ENCODE measurements at regions of chr4 and their contacts with region 1.

Region 1: GRCh38 chr4:159104694-159105414 is 2.0 kb downstream of the RAPGEF2 start:
- DNase-seq: no peak
- H3K4me3 Mint-ChIP-seq: peak overlapping the region; percentile 90
- H3K27ac Mint-ChIP-seq: peak overlapping the region; percentile 90
- H3K4me1 Mint-ChIP-seq: peaks cover 27% of the 10 kb centered on the region
- H3K27me3 Mint-ChIP-seq: no peaks in the 10 kb centered on the region
- CTCF ChIP-seq: no peak

Region 2: DNA sequence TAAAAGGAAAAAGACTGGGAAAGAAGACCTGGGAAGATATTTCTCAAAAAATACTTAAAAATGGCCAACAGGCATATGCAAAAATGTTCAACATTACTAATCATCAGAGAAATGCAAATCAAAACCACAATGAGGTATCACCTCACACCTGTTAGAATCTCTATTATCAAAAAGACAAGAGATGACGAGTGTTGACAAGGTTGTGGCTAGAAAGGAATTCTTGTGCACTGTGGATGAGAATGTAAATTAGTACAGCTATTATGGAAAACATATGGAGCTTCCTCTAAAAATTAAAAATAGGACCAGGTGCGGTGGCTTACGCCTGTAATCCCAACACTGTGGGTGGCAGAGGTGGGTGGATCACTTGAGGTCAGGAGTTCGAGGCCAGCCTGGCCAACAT is 483.1 kb before region 1 on chr4:
- CTCF ChIA-PET with region 1: no interaction called
- intact Hi-C with region 1: no loop called
- DNase-seq: no peak
- H3K4me3 Mint-ChIP-seq: no peak overlapping the region
- H3K27ac Mint-ChIP-seq: no peak overlapping the region
- H3K4me1 Mint-ChIP-seq: no peaks in the 10 kb centered on the region
- H3K27me3 Mint-ChIP-seq: no peaks in the 10 kb centered on the region
- CTCF ChIP-seq: no peak

Region 3: GRCh38 chr4:158895797-158896576 is 208.9 kb before region 1 on chr4:
- CTCF ChIA-PET with region 1: no interaction called
- intact Hi-C with region 1: loop called (anchors 2 kb)
- DNase-seq: peak; percentile 23
- H3K4me3 Mint-ChIP-seq: no peak overlapping the region
- H3K27ac Mint-ChIP-seq: peak overlapping the region; percentile 36
- H3K4me1 Mint-ChIP-seq: no peaks in the 10 kb centered on the region
- H3K27me3 Mint-ChIP-seq: no peaks in the 10 kb centered on the region
- CTCF ChIP-seq: no peak

Region 4: GRCh38 chr4:159048166-159048886 is 56.5 kb before region 1 on chr4:
- CTCF ChIA-PET with region 1: no interaction called
- intact Hi-C with region 1: loop called (anchors 5 kb)
- DNase-seq: peak; percentile 50
- H3K4me3 Mint-ChIP-seq: peak overlapping the region; percentile 29
- H3K27ac Mint-ChIP-seq: no peak overlapping the region
- H3K4me1 Mint-ChIP-seq: peaks cover 17% of the 10 kb centered on the region
- H3K27me3 Mint-ChIP-seq: no peaks in the 10 kb centered on the region
- CTCF ChIP-seq: no peak

Region 5: DNA sequence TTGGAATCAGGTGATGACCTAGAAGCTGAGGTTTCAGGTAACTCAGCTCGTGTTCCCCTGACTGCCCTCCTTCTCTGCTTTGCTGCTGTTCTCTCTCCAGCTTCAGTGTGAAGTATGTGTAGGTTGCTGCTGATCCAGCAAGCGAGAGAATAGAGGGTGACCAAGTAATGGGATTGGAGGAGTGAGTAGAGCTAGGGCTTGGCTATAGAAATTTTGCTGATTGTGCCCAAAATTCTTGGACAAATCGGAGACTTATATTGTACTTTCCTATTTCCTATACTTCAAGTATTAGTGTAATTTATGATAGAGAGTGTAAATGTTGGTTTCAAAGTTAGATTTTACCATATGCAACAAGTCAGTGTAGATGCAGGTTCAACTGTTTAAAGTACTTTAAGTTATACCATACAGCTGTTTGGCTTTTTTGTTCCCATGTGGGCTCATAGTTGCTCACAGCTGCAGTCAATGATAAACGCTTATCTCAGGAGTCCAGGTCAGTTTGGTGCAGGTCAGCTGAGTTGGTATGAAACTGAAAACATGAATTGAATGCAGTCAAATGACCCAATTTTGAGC is 46.1 kb after region 1 on chr4:
- CTCF ChIA-PET with region 1: no interaction called
- intact Hi-C with region 1: no loop called
- DNase-seq: no peak
- H3K4me3 Mint-ChIP-seq: no peak overlapping the region
- H3K27ac Mint-ChIP-seq: no peak overlapping the region
- H3K4me1 Mint-ChIP-seq: no peaks in the 10 kb centered on the region
- H3K27me3 Mint-ChIP-seq: no peaks in the 10 kb centered on the region
- CTCF ChIP-seq: no peak

Region 6: DNA sequence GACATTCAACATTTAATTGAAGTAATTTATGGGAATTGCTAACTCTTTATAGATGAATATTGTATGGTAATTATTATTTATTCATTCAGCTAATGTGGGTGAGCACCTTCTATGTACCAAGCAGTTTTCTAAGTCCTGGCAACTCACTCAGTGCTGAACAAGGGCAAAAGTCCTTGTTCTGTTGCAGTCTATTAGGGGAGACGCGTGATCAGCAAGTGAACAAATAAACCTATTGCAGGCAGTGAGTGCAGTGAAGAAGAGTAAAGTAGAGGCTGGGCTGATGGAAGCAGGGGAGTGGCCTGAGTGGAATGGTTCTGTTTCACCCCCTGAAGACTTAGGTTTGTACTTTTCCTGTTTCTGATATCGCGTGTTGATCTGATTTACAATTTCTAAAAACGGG is 212.3 kb after region 1 on chr4:
- CTCF ChIA-PET with region 1: no interaction called
- intact Hi-C with region 1: no loop called
- DNase-seq: no peak
- H3K4me3 Mint-ChIP-seq: no peak overlapping the region
- H3K27ac Mint-ChIP-seq: no peak overlapping the region
- H3K4me1 Mint-ChIP-seq: no peaks in the 10 kb centered on the region
- H3K27me3 Mint-ChIP-seq: no peaks in the 10 kb centered on the region
- CTCF ChIP-seq: no peak

Measured in Calu3 (cell line).